ENCODE measurements at regions of chr9 and their contacts with region 1.

Region 1: DNA sequence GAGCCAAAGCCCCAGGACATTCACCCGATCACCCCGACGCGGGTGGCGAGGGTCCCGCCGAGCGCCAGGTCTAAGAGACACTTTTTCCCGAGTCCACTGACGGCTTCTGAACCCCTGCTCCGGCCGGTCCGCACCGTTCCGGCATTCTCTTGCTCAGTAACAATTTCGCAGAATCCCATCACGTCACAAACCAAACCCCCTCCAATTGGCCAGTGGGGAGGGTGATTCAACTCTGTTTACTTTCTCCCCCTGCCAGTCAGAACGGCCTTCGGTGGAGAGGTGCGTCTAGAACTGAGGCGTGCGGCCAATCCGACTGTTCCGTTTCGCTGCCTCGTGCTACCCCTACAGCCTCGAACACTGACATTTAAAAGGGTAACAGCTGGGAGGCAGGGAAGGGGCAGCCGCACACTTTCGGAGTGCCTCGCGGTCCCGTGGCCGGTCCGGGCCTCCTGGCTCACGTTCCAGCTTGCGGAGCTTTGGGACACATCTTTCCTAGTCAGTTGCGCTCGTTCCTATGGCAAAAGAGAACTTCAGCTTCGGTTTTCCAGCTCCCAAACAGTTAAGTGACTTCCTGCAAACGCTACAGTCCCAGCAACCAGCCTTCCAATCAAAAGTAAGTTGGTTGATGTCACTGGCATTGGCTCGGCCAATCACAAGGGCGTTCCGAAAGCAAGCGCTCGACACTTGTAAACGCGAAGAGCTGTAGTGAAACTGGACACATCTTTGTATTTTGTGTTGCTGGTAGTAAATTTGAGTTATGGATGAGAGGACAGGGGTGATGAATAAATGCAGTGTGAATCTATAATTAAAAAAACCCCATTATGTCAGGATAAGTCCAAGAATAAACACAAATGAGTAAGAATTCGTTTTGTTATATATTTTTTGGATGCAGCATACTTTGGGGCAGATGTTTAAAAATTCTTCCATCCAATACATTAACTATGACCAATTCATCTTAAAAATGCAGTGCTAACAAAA is at the start of gene KLF9:
- DNase-seq: peak; percentile 80 to 98 (median 90)
- ATAC-seq: peak; percentile 78
- H3K4me3 ChIP-seq: peak within 1 kb of the TSS; percentile 40 to 73
- H3K4me3 Mint-ChIP-seq: peak within 1 kb of the TSS; percentile 99
- H3K27ac ChIP-seq: peak within 1 kb of the TSS; percentile 94 to 99
- H3K27ac Mint-ChIP-seq: peak within 1 kb of the TSS; percentile 100
- H3K4me1 ChIP-seq: peaks cover 39% of the 10 kb centered on the region
- H3K4me1 Mint-ChIP-seq: peaks cover 53% of the 10 kb centered on the region
- H3K27me3 ChIP-seq: no peaks in the 10 kb centered on the region
- H3K27me3 Mint-ChIP-seq: no peaks in the 10 kb centered on the region
- CTCF ChIP-seq: no peak
- total RNA-seq, gene KLF9: 84.0 to 87.1 TPM

Region 2: DNA sequence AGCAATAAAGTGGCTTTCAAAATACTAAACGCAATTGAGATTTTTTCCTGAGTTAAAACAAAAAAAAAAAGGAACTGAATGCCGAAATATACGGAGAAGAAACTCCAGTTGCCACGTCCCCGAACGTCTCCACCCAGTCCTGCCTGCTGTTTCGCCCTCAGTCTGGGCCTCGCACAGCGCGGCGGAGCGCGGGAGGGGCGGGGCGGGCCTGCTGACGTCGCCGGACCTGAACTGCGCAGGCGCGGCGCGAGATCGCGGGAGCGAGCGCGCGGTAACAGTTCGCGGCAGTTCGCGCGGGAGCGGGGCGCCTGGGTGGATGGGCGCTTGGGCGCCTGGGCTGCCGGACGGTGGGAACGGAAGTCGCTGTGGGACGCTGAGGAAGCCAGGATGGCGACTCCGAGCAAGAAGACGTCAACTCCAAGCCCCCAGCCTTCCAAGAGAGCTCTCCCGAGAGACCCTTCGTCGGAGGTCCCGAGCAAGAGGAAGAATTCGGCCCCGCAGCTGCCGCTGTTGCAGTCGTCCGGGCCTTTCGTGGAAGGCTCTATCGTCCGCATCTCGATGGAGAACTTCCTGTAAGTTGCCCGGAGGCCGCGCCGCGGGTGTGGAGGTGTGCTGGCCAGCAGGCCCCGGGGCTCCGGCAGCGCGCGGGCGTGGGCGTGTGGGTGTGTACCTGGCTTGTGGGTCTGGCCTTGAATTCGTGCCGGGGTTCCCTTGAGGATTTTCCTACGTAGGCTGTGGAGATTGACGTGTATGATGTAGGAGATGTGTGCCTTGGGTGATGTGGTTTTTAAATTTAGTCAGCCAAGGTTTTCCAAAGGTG is 155.2 kb before region 1 on chr9 and contains the start of gene SMC5:
- CTCF ChIA-PET with region 1: interaction called, 3 read pairs
- POLR2A ChIA-PET with region 1: interaction called, 8 read pairs
- intact Hi-C with region 1: loop called (anchors 2 kb)
- DNase-seq: peak; percentile 76 to 95 (median 87)
- ATAC-seq: peak; percentile 87
- H3K4me3 ChIP-seq: peak within 1 kb of the TSS; percentile 89 to 97
- H3K4me3 Mint-ChIP-seq: peak within 1 kb of the TSS; percentile 95
- H3K27ac ChIP-seq: peak within 1 kb of the TSS; percentile 85 to 94
- H3K27ac Mint-ChIP-seq: peak within 1 kb of the TSS; percentile 96
- H3K4me1 ChIP-seq: peaks cover 54% of the 10 kb centered on the region
- H3K4me1 Mint-ChIP-seq: peaks cover 66% of the 10 kb centered on the region
- H3K27me3 ChIP-seq: no peaks in the 10 kb centered on the region
- H3K27me3 Mint-ChIP-seq: no peaks in the 10 kb centered on the region
- CTCF ChIP-seq: no peak
- total RNA-seq, gene SMC5: 28.6 to 32.0 TPM

Region 3: GRCh38 chr9:70374962-70375618 is 39.0 kb before region 1 on chr9:
- CTCF ChIA-PET with region 1: no interaction called
- POLR2A ChIA-PET with region 1: no interaction called
- intact Hi-C with region 1: no loop called
- DNase-seq: no peak
- ATAC-seq: no peak
- H3K4me3 ChIP-seq: no peak overlapping the region
- H3K4me3 Mint-ChIP-seq: no peak overlapping the region
- H3K27ac ChIP-seq: no peak overlapping the region
- H3K27ac Mint-ChIP-seq: no peak overlapping the region
- H3K4me1 ChIP-seq: no peaks in the 10 kb centered on the region
- H3K4me1 Mint-ChIP-seq: no peaks in the 10 kb centered on the region
- H3K27me3 ChIP-seq: no peaks in the 10 kb centered on the region
- H3K27me3 Mint-ChIP-seq: no peaks in the 10 kb centered on the region
- CTCF ChIP-seq: no peak

Region 4: GRCh38 chr9:70390933-70391341 is 23.1 kb before region 1 on chr9:
- CTCF ChIA-PET with region 1: interaction called, 5 read pairs
- POLR2A ChIA-PET with region 1: interaction called, 8 read pairs
- intact Hi-C with region 1: loop called in 1 of 2 experiments (anchors 1 kb)
- DNase-seq: peak in 1 of 9 experiments; percentile 20
- ATAC-seq: no peak
- H3K4me3 ChIP-seq: no peak overlapping the region
- H3K4me3 Mint-ChIP-seq: peak overlapping the region; percentile 23
- H3K27ac ChIP-seq: no peak overlapping the region
- H3K27ac Mint-ChIP-seq: peak overlapping the region; percentile 45
- H3K4me1 ChIP-seq: peaks cover 60% of the 10 kb centered on the region
- H3K4me1 Mint-ChIP-seq: peaks cover 88% of the 10 kb centered on the region
- H3K27me3 ChIP-seq: no peaks in the 10 kb centered on the region
- H3K27me3 Mint-ChIP-seq: no peaks in the 10 kb centered on the region
- CTCF ChIP-seq: no peak

Region 5: GRCh38 chr9:70563431-70564204 is 149.5 kb after region 1 on chr9:
- CTCF ChIA-PET with region 1: no interaction called
- POLR2A ChIA-PET with region 1: interaction called, 25 read pairs
- intact Hi-C with region 1: loop called in 1 of 2 experiments (anchors 5 kb)
- DNase-seq: peak in 7 of 9 experiments; percentile 24 to 79 (median 49)
- ATAC-seq: peak; percentile 88
- H3K4me3 ChIP-seq: peak overlapping the region in 1 of 2 experiments; percentile 8
- H3K4me3 Mint-ChIP-seq: peak overlapping the region; percentile 54
- H3K27ac ChIP-seq: peak overlapping the region; percentile 46 to 71
- H3K27ac Mint-ChIP-seq: peak overlapping the region; percentile 96
- H3K4me1 ChIP-seq: peaks cover 43% of the 10 kb centered on the region
- H3K4me1 Mint-ChIP-seq: peaks cover 49% of the 10 kb centered on the region
- H3K27me3 ChIP-seq: no peaks in the 10 kb centered on the region
- H3K27me3 Mint-ChIP-seq: no peaks in the 10 kb centered on the region
- CTCF ChIP-seq: no peak

Region 6: GRCh38 chr9:71911253-71912074 is 1497.4 kb after region 1 on chr9 and contains the start of gene C9orf85:
- CTCF ChIA-PET with region 1: no interaction called
- POLR2A ChIA-PET with region 1: no interaction called
- intact Hi-C with region 1: loop called in 1 of 2 experiments (anchors 5 kb)
- DNase-seq: peak; percentile 91 to 99 (median 96)
- ATAC-seq: peak; percentile 93
- H3K4me3 ChIP-seq: peak within 1 kb of the TSS; percentile 80 to 89
- H3K4me3 Mint-ChIP-seq: peak within 1 kb of the TSS; percentile 99
- H3K27ac ChIP-seq: peak within 1 kb of the TSS; percentile 63 to 84
- H3K27ac Mint-ChIP-seq: peak within 1 kb of the TSS; percentile 96
- H3K4me1 ChIP-seq: peaks cover 26% of the 10 kb centered on the region
- H3K4me1 Mint-ChIP-seq: peaks cover 71% of the 10 kb centered on the region
- H3K27me3 ChIP-seq: no peaks in the 10 kb centered on the region
- H3K27me3 Mint-ChIP-seq: no peaks in the 10 kb centered on the region
- CTCF ChIP-seq: no peak
- total RNA-seq, gene C9orf85: 3.1 to 4.0 TPM

Measured in CD8-positive, alpha-beta T cell (primary cell).